PC-9 (cell line): ENCODE measurements at regions of chr14 and their contacts with region 1.

Region 1: DNA sequence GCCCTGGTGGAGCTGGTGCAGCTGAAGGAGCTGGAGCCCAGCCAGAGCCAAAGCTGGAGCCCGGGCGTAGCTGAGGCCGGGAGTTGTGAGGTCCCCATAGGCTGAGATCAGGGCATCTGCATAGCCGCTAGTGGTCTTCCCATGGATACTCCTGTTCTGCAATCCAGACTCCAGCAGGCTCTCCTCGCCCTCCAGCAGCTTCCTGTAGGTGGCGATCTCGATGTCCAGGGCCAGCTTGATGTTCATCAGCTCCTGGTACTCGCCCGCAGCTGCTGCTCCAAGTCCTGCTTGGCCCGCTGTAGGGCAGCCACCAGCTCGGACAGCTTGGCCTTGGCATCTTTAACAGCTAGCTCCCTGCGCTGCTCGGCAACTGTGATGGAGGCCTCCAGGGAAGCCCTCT is 966.1 kb downstream of the FSCB start:
- DNase-seq: no peak
- H3K4me3 ChIP-seq: no peak overlapping the region
- H3K27ac ChIP-seq: no peak overlapping the region
- H3K4me1 ChIP-seq: no peaks in the 10 kb centered on the region
- H3K27me3 ChIP-seq: no peaks in the 10 kb centered on the region
- CTCF ChIP-seq: no peak

Region 2: GRCh38 chr14:43449377-43450080 is 91.4 kb before region 1 on chr14:
- CTCF ChIA-PET with region 1: no interaction called
- POLR2A ChIA-PET with region 1: no interaction called
- intact Hi-C with region 1: no loop called
- DNase-seq: no peak
- H3K4me3 ChIP-seq: no peak overlapping the region
- H3K27ac ChIP-seq: no peak overlapping the region
- H3K4me1 ChIP-seq: no peaks in the 10 kb centered on the region
- H3K27me3 ChIP-seq: no peaks in the 10 kb centered on the region
- CTCF ChIP-seq: no peak

Region 3: GRCh38 chr14:43568022-43568421 is 27.1 kb after region 1 on chr14:
- CTCF ChIA-PET with region 1: interaction called, 14 read pairs
- POLR2A ChIA-PET with region 1: no interaction called
- intact Hi-C with region 1: no loop called
- DNase-seq: no peak
- H3K4me3 ChIP-seq: no peak overlapping the region
- H3K27ac ChIP-seq: no peak overlapping the region
- H3K4me1 ChIP-seq: no peaks in the 10 kb centered on the region
- H3K27me3 ChIP-seq: no peaks in the 10 kb centered on the region
- CTCF ChIP-seq: no peak

Region 4: GRCh38 chr14:44412858-44413569 is 872.1 kb after region 1 on chr14:
- CTCF ChIA-PET with region 1: no interaction called
- POLR2A ChIA-PET with region 1: no interaction called
- intact Hi-C with region 1: no loop called
- DNase-seq: no peak
- H3K4me3 ChIP-seq: no peak overlapping the region
- H3K27ac ChIP-seq: no peak overlapping the region
- H3K4me1 ChIP-seq: no peaks in the 10 kb centered on the region
- H3K27me3 ChIP-seq: no peaks in the 10 kb centered on the region
- CTCF ChIP-seq: no peak